ENCODE measurements at regions of chr4 and their contacts with region 1.

Region 1: DNA sequence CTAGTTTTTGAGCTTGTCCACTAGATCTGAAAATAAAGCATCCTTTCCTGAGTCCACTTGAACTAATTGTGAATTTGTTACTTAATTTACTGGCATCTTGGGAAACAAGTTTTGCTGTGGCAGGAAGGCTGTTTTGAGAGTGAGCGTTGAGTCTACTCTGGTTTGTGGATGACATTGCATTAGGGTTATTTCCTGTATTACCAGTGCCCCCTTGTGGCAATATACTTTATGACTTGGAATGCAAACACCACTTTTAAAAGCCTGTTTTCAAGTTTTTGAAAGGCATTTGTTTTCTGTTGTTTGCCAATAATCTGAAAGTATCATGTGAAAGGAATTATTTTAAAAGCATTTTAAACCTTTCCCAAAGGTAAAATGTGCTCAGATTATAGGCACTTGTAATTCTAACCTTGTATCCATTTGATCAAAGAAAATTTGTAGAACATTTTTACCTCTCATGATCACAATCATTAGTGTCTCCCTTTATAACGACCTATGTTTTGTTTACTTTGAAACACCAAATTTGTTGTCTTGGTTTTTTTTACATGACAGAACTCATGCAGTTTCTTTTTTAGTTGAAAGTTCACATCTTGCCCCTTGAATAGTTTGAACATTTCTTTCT is 18.0 kb upstream of the CYP2U1 start:
- DNase-seq: peak; percentile 79
- H3K4me3 Mint-ChIP-seq: no peak overlapping the region
- H3K27ac Mint-ChIP-seq: no peak overlapping the region
- H3K4me1 Mint-ChIP-seq: no peaks in the 10 kb centered on the region
- H3K27me3 Mint-ChIP-seq: no peaks in the 10 kb centered on the region
- CTCF ChIP-seq: peak; percentile 50

Region 2: GRCh38 chr4:107902715-107903114 is 10.7 kb before region 1 on chr4:
- CTCF ChIA-PET with region 1: interaction called, 29 read pairs
- POLR2A ChIA-PET with region 1: no interaction called
- intact Hi-C with region 1: no loop called
- DNase-seq: no peak
- H3K4me3 Mint-ChIP-seq: no peak overlapping the region
- H3K27ac Mint-ChIP-seq: no peak overlapping the region
- H3K4me1 Mint-ChIP-seq: peaks cover 13% of the 10 kb centered on the region
- H3K27me3 Mint-ChIP-seq: no peaks in the 10 kb centered on the region
- CTCF ChIP-seq: no peak

Measured in MCF 10A (cell line).